GM12878 (cell line): ENCODE measurements at regions of chr11 and their contacts with region 1.

Region 1: GRCh38 chr11:25981998-25982397 is 349.9 kb upstream of the ANO3 start:
- DNase-seq: peak; percentile 46
- ATAC-seq: peak; percentile 98
- H3K4me3 ChIP-seq: no peak overlapping the region
- H3K27ac ChIP-seq: no peak overlapping the region
- H3K4me1 ChIP-seq: peaks cover 5% of the 10 kb centered on the region; the same call in 1 of the 2 replicates
- H3K27me3 ChIP-seq: no peaks in the 10 kb centered on the region
- CTCF ChIP-seq: peak; percentile 39 to 65 (median 51); a peak in 5 of 6 replicates
- EP300 ChIP-seq: no peak
- POLR2A ChIP-seq: no peak
- RAD21 ChIP-seq: peak; percentile 91

Region 2: DNA sequence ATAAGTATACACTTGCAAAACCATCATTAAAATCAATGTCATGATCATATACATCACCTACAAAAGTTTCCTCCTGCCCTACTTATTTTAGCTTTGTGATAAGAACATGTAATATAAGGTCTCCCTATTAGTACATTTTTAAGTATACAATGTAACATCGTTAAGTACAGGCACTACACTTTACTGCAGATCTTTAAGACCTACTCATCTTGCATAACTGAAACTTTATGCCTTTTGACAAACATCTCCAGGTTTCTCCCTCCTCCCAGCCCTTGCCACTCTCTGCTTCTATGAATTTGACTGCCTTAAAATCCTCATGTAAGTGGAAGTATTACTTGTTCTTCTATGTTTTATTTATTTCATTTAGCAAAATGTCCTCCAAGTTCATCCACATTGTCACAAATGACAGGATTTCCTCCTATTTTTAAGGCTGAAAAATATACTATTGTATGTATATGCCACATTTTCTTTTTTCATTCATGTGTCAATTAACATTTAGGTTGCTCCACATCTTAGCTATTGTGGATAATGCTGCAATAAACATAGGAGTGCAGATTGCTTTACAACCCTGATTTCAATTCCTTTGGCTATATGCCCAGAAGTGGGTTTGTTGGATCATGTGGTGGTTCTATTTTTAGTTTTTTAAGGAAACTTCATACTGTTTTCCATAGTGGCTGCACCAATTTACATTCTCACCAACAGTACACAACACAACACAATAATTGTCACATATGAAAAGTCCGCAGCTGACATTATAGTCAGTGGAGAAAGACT is 121.1 kb before region 1 on chr11:
- CTCF ChIA-PET with region 1: no interaction called
- POLR2A ChIA-PET with region 1: no interaction called
- RAD21 ChIA-PET with region 1: no interaction called
- SMC1A ChIA-PET with region 1: no interaction called
- in situ Hi-C with region 1: no loop called
- intact Hi-C with region 1: no loop called
- DNase-seq: no peak
- ATAC-seq: no peak
- H3K4me3 ChIP-seq: no peak overlapping the region
- H3K27ac ChIP-seq: no peak overlapping the region
- H3K4me1 ChIP-seq: no peaks in the 10 kb centered on the region
- H3K27me3 ChIP-seq: no peaks in the 10 kb centered on the region
- CTCF ChIP-seq: no peak
- EP300 ChIP-seq: no peak
- POLR2A ChIP-seq: no peak
- RAD21 ChIP-seq: no peak

Region 3: DNA sequence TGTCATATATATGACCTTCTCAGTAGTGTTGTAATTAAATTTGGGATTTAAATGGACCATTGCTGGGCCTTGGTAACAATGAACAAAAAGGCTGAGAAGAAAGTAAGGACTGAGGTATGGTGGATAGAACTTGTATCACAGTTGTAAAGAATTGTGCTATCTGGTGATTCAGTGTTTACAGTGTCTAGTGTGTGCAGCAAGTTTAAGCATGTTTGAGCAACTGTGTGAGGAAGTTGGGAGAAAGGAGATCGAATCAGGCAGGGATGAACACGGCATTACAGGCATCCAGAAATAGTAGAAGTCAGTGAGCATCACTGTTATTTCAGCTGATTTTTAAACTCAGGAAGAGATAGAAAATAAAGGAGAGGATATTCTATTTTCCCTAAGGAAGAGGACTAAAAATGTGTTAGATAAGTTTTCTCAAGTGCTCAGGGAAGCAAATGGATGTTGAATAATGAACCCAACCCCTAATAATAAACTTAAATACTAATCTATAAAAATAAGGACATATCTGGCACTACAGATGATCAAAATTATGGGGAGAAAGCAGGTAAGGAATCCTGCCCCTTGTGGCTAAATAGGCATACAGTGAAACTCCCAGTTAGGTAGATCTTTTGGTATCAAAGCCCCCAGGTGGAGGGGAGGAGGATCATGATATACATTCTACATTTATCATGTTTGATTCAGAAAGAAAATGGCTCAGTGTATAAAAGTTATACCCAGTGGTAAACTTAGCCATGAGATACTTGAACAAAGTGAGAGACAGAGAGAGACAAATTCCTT is 11.1 kb before region 1 on chr11:
- CTCF ChIA-PET with region 1: interaction called, 8 read pairs
- POLR2A ChIA-PET with region 1: no interaction called
- RAD21 ChIA-PET with region 1: no interaction called
- SMC1A ChIA-PET with region 1: interaction called, 11 read pairs
- in situ Hi-C with region 1: no loop called
- intact Hi-C with region 1: no loop called
- DNase-seq: no peak
- ATAC-seq: 0 out of 3 replicates have a peak, but pooled peaks have one; percentile 43
- H3K4me3 ChIP-seq: no peak overlapping the region
- H3K27ac ChIP-seq: no peak overlapping the region
- H3K4me1 ChIP-seq: no peaks in the 10 kb centered on the region
- H3K27me3 ChIP-seq: no peaks in the 10 kb centered on the region
- CTCF ChIP-seq: peak in 2 of 3 experiments; percentile 30 to 41; a peak in 4 of 6 replicates
- EP300 ChIP-seq: no peak
- POLR2A ChIP-seq: no peak
- RAD21 ChIP-seq: no peak

Region 4: GRCh38 chr11:25992294-25992693 is 10.3 kb after region 1 on chr11:
- CTCF ChIA-PET with region 1: interaction called, 18 read pairs
- POLR2A ChIA-PET with region 1: no interaction called
- RAD21 ChIA-PET with region 1: interaction called, 12 read pairs
- SMC1A ChIA-PET with region 1: interaction called, 7 read pairs
- in situ Hi-C with region 1: no loop called
- intact Hi-C with region 1: no loop called
- DNase-seq: no peak
- ATAC-seq: no peak
- H3K4me3 ChIP-seq: no peak overlapping the region
- H3K27ac ChIP-seq: no peak overlapping the region
- H3K4me1 ChIP-seq: no peaks in the 10 kb centered on the region
- H3K27me3 ChIP-seq: no peaks in the 10 kb centered on the region
- CTCF ChIP-seq: no peak
- EP300 ChIP-seq: no peak
- POLR2A ChIP-seq: no peak
- RAD21 ChIP-seq: no peak

Region 5: DNA sequence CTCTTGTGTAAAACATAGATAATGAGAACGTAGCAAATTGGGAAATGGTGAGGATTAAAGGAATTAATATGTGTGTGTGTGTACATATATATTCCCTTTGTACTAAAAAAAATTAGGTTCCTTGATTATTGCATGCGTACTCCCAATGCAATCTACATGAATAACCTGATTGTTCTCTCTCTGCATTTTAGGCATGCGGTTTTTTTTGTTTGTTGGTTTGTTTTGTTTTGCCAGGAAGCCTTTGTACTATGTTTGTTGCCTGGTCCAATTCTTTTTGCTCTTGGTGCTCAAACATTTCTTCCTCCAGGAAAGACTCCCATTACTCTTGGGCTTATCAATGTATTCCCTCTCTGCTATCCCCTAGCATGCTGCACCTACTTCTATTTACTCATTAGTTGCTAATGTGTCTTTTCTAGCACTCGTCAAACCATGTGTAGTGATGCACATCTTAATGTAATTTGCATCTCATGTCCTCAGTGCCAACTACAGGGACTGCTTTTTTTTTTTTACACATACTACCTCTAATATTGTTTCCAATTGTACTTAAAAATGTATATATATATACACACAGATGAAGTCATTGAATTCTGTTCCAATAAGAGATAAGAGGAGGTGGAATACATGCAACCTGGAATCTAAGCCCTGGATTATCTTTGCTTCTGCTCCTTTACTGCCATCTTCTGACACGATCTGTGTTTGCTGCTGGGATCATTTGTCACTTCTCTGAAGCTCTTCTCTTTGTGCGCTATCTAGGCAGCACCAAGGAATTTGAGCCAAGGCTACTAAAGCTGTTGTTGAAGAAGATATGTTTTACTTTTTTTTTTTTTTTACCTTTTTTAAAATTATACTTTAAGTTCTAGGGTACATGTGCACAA is 152.7 kb after region 1 on chr11:
- CTCF ChIA-PET with region 1: interaction called, 46 read pairs
- POLR2A ChIA-PET with region 1: no interaction called
- RAD21 ChIA-PET with region 1: interaction called, 20 read pairs
- SMC1A ChIA-PET with region 1: interaction called, 16 read pairs
- in situ Hi-C with region 1: no loop called
- intact Hi-C with region 1: loop called (anchors 1 kb)
- DNase-seq: no peak
- ATAC-seq: peak; percentile 54; the same call in 2 of the 3 replicates
- H3K4me3 ChIP-seq: no peak overlapping the region
- H3K27ac ChIP-seq: no peak overlapping the region
- H3K4me1 ChIP-seq: no peaks in the 10 kb centered on the region
- H3K27me3 ChIP-seq: no peaks in the 10 kb centered on the region
- CTCF ChIP-seq: peak; percentile 34 to 47 (median 42); a peak in 5 of 6 replicates
- EP300 ChIP-seq: no peak
- POLR2A ChIP-seq: no peak
- RAD21 ChIP-seq: peak; percentile 77

Region 6: GRCh38 chr11:26162291-26162690 is 180.3 kb after region 1 on chr11:
- CTCF ChIA-PET with region 1: no interaction called
- POLR2A ChIA-PET with region 1: no interaction called
- RAD21 ChIA-PET with region 1: no interaction called
- SMC1A ChIA-PET with region 1: no interaction called
- in situ Hi-C with region 1: no loop called
- intact Hi-C with region 1: no loop called
- DNase-seq: no peak
- ATAC-seq: no peak
- H3K4me3 ChIP-seq: no peak overlapping the region
- H3K27ac ChIP-seq: no peak overlapping the region
- H3K4me1 ChIP-seq: no peaks in the 10 kb centered on the region
- H3K27me3 ChIP-seq: no peaks in the 10 kb centered on the region
- CTCF ChIP-seq: no peak
- EP300 ChIP-seq: no peak
- POLR2A ChIP-seq: no peak
- RAD21 ChIP-seq: no peak

Region 7: GRCh38 chr11:26219183-26220117 is 237.5 kb after region 1 on chr11:
- CTCF ChIA-PET with region 1: interaction called, 3 read pairs
- POLR2A ChIA-PET with region 1: no interaction called
- RAD21 ChIA-PET with region 1: interaction called, 6 read pairs
- SMC1A ChIA-PET with region 1: no interaction called
- in situ Hi-C with region 1: loop called (anchors 5 kb)
- intact Hi-C with region 1: no loop called
- DNase-seq: no peak
- ATAC-seq: no peak
- H3K4me3 ChIP-seq: no peak overlapping the region
- H3K27ac ChIP-seq: no peak overlapping the region
- H3K4me1 ChIP-seq: no peaks in the 10 kb centered on the region
- H3K27me3 ChIP-seq: no peaks in the 10 kb centered on the region
- CTCF ChIP-seq: no peak
- EP300 ChIP-seq: no peak
- POLR2A ChIP-seq: no peak
- RAD21 ChIP-seq: no peak

Region 8: GRCh38 chr11:26227296-26227695 is 245.3 kb after region 1 on chr11:
- CTCF ChIA-PET with region 1: interaction called, 34 read pairs
- POLR2A ChIA-PET with region 1: no interaction called
- RAD21 ChIA-PET with region 1: interaction called, 13 read pairs
- SMC1A ChIA-PET with region 1: interaction called, 14 read pairs
- in situ Hi-C with region 1: loop called (anchors 5 kb)
- intact Hi-C with region 1: loop called (anchors 1 kb)
- DNase-seq: peak; percentile 24
- ATAC-seq: peak; percentile 88
- H3K4me3 ChIP-seq: no peak overlapping the region
- H3K27ac ChIP-seq: no peak overlapping the region
- H3K4me1 ChIP-seq: no peaks in the 10 kb centered on the region
- H3K27me3 ChIP-seq: no peaks in the 10 kb centered on the region
- CTCF ChIP-seq: peak; percentile 29 to 66 (median 53); a peak in 5 of 6 replicates
- EP300 ChIP-seq: no peak
- POLR2A ChIP-seq: no peak
- RAD21 ChIP-seq: peak; percentile 91

Region 9: GRCh38 chr11:26276798-26277424 is 294.9 kb after region 1 on chr11:
- CTCF ChIA-PET with region 1: interaction called, 14 read pairs
- POLR2A ChIA-PET with region 1: no interaction called
- RAD21 ChIA-PET with region 1: interaction called, 7 read pairs
- SMC1A ChIA-PET with region 1: interaction called, 6 read pairs
- in situ Hi-C with region 1: loop called (anchors 5 kb)
- intact Hi-C with region 1: loop called (anchors 1 kb)
- DNase-seq: no peak
- ATAC-seq: peak; percentile 88
- H3K4me3 ChIP-seq: no peak overlapping the region
- H3K27ac ChIP-seq: no peak overlapping the region
- H3K4me1 ChIP-seq: no peaks in the 10 kb centered on the region
- H3K27me3 ChIP-seq: no peaks in the 10 kb centered on the region
- CTCF ChIP-seq: peak; percentile 86 to 89 (median 89)
- EP300 ChIP-seq: no peak
- POLR2A ChIP-seq: no peak
- RAD21 ChIP-seq: peak; percentile 89

Region 10: DNA sequence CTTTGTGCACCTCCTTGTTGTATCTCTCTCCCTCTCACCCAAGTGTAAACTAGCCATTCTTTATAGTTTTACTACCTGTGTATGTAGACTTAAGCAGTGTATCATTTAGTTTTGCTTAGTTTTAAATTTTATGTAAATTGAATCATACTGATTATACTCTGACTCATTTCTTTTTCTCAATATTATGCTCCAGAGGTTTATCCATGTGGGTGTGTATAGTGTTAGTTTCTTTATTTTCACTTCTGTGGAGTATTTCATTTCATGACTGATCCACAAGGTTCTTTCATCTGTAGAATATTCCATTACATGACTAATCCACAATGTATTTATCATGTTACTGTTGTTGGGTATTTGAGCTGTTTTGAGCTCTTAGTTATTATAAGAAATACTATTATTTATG is 1319.0 kb after region 1 on chr11:
- CTCF ChIA-PET with region 1: no interaction called
- POLR2A ChIA-PET with region 1: no interaction called
- RAD21 ChIA-PET with region 1: no interaction called
- SMC1A ChIA-PET with region 1: no interaction called
- in situ Hi-C with region 1: no loop called
- intact Hi-C with region 1: no loop called
- DNase-seq: no peak
- ATAC-seq: no peak
- H3K4me3 ChIP-seq: no peak overlapping the region
- H3K27ac ChIP-seq: no peak overlapping the region
- H3K4me1 ChIP-seq: no peaks in the 10 kb centered on the region
- H3K27me3 ChIP-seq: no peaks in the 10 kb centered on the region
- CTCF ChIP-seq: no peak
- EP300 ChIP-seq: no peak
- POLR2A ChIP-seq: no peak
- RAD21 ChIP-seq: no peak